Panc1 (cell line): ENCODE measurements at regions of chr6 and their contacts with region 1.

Region 1: DNA sequence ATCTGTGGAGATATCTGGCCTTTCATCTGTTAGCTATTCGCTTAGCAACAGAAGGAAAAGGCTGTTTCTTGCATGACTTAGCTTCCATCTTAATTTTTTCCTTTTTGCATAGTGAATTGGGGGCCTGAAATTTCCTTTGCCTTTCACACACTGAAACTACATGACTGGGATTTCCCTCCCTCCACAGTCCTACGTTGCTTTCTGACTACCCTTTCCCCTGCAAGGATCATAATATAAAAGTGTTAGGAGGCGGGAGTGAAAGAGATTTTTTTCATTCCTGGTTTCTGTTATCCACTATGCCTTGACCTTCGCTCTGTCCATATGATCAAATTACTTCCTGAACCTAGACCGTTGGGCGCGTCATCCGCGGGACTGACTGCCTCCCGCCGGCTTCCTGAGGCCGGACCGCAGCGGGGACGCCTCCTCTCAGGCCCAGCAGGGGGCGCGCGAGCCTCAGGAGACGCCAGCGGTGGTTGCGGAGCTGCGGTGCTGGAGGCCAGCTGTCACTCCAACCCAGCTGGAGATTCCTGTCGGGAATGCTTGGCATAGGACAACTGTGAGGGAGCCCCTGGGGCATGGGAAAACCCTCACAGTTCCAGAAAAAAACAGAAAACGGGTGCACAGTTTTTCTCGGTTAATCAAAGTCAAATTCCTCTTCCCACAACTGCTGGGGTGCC is 55.6 kb downstream of the MEP1A start:
- DNase-seq: peak; percentile 18
- ATAC-seq: peak; percentile 99
- H3K4me3 ChIP-seq: 0 out of 4 replicates have a peak overlapping the region, but pooled peaks of 1 of the 2 experiments have one; percentile 17
- H3K27ac ChIP-seq: peak overlapping the region; percentile 71; the same call in 1 of the 2 replicates
- H3K4me1 ChIP-seq: peaks cover 4% of the 10 kb centered on the region
- H3K27me3 ChIP-seq: no peaks in the 10 kb centered on the region
- CTCF ChIP-seq: peak; percentile 91

Region 2: DNA sequence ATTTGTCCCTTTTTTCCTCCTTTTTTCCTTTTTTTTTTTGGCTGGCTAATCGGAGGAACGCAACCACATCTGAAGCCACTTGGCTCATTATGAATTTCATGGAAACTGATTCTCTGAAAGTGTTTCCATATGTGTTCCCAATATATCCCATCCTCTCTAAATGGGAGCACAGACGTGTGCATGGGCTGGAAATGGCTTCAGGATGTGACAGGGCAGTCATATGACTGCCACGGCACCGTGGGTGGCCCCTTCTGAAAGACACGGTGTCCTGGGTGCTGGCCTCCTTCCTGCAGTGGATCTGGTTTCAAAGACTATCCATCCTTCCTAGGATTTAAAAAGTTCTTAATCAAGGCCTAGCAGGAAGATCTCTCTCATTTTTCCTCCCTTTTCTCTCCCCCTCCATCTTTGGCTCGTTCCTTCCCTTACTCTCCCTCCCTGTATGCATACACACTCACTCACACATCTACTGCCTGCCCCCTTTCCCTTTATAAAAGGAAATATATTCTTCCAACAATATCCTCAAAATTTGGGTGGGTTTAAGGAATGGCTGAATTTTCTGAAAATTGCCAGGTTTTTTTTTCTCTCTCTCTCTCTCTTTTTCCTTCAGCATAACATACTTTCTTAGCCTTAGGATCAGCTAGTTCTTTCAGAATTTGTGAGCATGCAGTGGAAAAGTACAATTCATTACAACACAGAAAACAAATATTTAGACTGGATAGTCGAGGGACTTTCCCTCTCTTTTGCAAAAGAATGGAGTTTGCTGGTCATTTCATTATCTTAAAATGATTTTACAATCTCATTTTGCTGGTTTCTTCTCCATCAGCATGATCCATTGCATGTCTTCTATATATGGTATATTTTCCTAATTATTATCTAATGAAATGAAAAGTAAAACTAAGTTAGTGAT is 1309.9 kb before region 1 on chr6:
- CTCF ChIA-PET with region 1: no interaction called
- POLR2A ChIA-PET with region 1: no interaction called
- in situ Hi-C with region 1: no loop called
- intact Hi-C with region 1: no loop called
- DNase-seq: no peak
- ATAC-seq: no peak
- H3K4me3 ChIP-seq: no peak overlapping the region
- H3K27ac ChIP-seq: no peak overlapping the region
- H3K4me1 ChIP-seq: no peaks in the 10 kb centered on the region
- H3K27me3 ChIP-seq: no peaks in the 10 kb centered on the region
- CTCF ChIP-seq: no peak

Region 3: GRCh38 chr6:46914279-46914810 is 65.5 kb after region 1 on chr6:
- CTCF ChIA-PET with region 1: no interaction called
- POLR2A ChIA-PET with region 1: no interaction called
- in situ Hi-C with region 1: no loop called
- intact Hi-C with region 1: no loop called
- DNase-seq: no peak
- ATAC-seq: peak; percentile 74
- H3K4me3 ChIP-seq: no peak overlapping the region
- H3K27ac ChIP-seq: no peak overlapping the region
- H3K4me1 ChIP-seq: no peaks in the 10 kb centered on the region; the same call in 1 of the 2 replicates
- H3K27me3 ChIP-seq: no peaks in the 10 kb centered on the region
- CTCF ChIP-seq: no peak

Region 4: DNA sequence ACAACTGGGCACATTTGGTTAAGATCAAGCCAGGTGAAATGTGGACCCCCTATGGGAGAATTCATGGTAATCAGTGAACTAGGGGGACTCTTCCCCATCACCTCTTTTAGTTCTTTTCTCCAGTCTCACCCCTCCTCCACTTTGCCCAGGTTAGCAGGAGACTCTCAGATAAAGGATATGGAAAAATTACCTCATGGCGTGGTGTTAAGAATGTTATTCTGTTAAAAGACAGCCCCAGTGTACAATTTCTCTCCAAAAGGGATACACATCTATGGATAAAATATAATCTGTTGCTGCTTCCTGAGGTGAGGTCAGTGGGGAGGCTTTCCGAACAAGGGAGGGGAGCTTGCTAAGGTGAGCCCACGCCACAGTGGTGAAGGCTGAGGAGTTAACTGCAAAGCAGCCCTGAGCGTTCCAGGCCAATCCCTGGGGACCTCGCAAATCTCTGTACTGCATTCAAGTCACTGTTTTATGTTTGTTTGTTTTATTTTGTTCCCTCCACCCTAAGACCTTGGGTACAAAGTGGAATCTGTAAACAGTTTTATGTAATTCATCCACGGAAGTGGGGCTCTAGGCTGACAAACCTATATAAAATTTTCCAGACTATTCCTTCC is 141.3 kb after region 1 on chr6:
- CTCF ChIA-PET with region 1: no interaction called
- POLR2A ChIA-PET with region 1: no interaction called
- in situ Hi-C with region 1: no loop called
- intact Hi-C with region 1: loop called (anchors 2 kb)
- DNase-seq: no peak
- ATAC-seq: peak; percentile 69
- H3K4me3 ChIP-seq: no peak overlapping the region
- H3K27ac ChIP-seq: no peak overlapping the region
- H3K4me1 ChIP-seq: 0 out of 2 replicates have a peak, but pooled peaks cover 4% of the 10 kb centered on the region
- H3K27me3 ChIP-seq: no peaks in the 10 kb centered on the region
- CTCF ChIP-seq: no peak

Region 5: GRCh38 chr6:47047479-47048407 is 198.9 kb after region 1 on chr6:
- CTCF ChIA-PET with region 1: no interaction called
- POLR2A ChIA-PET with region 1: no interaction called
- in situ Hi-C with region 1: no loop called
- intact Hi-C with region 1: loop called (anchors 2 kb)
- DNase-seq: peak; percentile 83
- ATAC-seq: peak; percentile 97
- H3K4me3 ChIP-seq: no peak overlapping the region
- H3K27ac ChIP-seq: peak overlapping the region; percentile 62
- H3K4me1 ChIP-seq: peaks cover 7% of the 10 kb centered on the region; the same call in 1 of the 2 replicates
- H3K27me3 ChIP-seq: no peaks in the 10 kb centered on the region
- CTCF ChIP-seq: peak; percentile 85

Region 6: GRCh38 chr6:47180633-47181032 is 331.8 kb after region 1 on chr6:
- CTCF ChIA-PET with region 1: no interaction called
- POLR2A ChIA-PET with region 1: no interaction called
- in situ Hi-C with region 1: no loop called
- intact Hi-C with region 1: no loop called
- DNase-seq: no peak
- ATAC-seq: peak; percentile 82
- H3K4me3 ChIP-seq: no peak overlapping the region
- H3K27ac ChIP-seq: no peak overlapping the region
- H3K4me1 ChIP-seq: no peaks in the 10 kb centered on the region
- H3K27me3 ChIP-seq: no peaks in the 10 kb centered on the region
- CTCF ChIP-seq: no peak